SK-N-SH (cell line): ENCODE measurements at regions of chr6 and their contacts with region 1.

Region 1: GRCh38 chr6:37691904-37692806 is 5.5 kb downstream of the MDGA1 start:
- DNase-seq: peak; percentile 90
- H3K4me3 ChIP-seq: no peak overlapping the region; a peak in 1 of 4 replicates
- H3K27ac ChIP-seq: peak overlapping the region in 1 of 2 experiments; percentile 20; a peak in 1 of 4 replicates
- H3K4me1 ChIP-seq: peaks cover 4 to 25% of the 10 kb centered on the region in 2 experiments; a peak in 3 of 4 replicates
- H3K27me3 ChIP-seq: no peaks in the 10 kb centered on the region
- CTCF ChIP-seq: peak; percentile 96
- EP300 ChIP-seq: no peak
- RAD21 ChIP-seq: peak; percentile 99

Region 2: DNA sequence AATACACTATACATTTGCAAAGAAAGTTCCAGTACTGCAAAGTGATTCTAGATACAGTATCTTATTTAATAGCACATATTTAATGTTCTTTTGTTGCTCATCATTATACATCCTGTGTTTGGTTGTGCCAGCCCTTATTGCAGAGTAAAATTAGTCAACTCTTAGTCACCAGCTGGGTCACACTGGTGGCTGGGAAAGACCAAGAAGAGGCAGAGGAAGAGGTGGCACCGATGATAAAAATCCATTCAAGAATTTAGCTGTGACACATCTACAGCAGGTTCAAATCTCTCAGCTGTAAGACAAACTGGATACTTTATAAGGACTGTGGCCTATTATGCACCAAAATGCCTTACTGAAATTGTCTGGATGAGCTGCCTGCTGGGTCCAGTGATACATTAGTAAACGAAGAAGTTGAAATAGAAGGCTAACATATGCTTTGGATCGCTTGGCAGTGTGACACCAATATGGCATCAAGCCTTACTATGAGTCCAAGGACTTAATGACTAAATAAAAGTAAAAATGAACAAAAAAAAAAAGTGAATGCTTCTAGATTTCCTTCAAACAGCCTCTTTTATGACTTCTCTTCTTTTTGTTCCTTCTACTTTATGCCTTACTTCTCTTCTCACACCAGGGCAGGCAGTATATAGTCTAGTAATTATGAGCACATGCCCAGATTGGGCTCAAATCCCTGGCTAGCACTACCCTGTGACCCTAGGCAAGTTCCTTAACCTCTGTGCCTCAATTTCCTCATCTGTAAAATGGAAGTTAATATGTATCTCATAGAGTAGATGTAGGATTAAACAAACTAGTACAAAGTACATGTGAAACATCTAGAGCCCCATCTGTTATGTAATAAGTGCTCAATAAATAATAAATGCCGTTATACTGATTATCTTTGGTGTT is 367.8 kb before region 1 on chr6:
- CTCF ChIA-PET with region 1: interaction called, 15 read pairs
- POLR2A ChIA-PET with region 1: no interaction called
- DNase-seq: no peak
- H3K4me3 ChIP-seq: no peak overlapping the region
- H3K27ac ChIP-seq: peak overlapping the region in 1 of 2 experiments; percentile 65; a peak in 2 of 4 replicates
- H3K4me1 ChIP-seq: peaks cover 13 to 14% of the 10 kb centered on the region in 2 experiments; a peak in 3 of 4 replicates
- H3K27me3 ChIP-seq: no peaks in the 10 kb centered on the region
- CTCF ChIP-seq: no peak
- EP300 ChIP-seq: no peak
- RAD21 ChIP-seq: no peak

Region 3: GRCh38 chr6:37473397-37474095 is 218.6 kb before region 1 on chr6:
- CTCF ChIA-PET with region 1: interaction called, 21 read pairs
- POLR2A ChIA-PET with region 1: no interaction called
- DNase-seq: peak; percentile 84
- H3K4me3 ChIP-seq: no peak overlapping the region
- H3K27ac ChIP-seq: peak overlapping the region in 1 of 2 experiments; percentile 88; a peak in 3 of 4 replicates
- H3K4me1 ChIP-seq: peaks cover 7 to 32% of the 10 kb centered on the region in 2 experiments; a peak in 3 of 4 replicates
- H3K27me3 ChIP-seq: no peaks in the 10 kb centered on the region
- CTCF ChIP-seq: no peak
- EP300 ChIP-seq: peak; percentile 23 to 85; a peak in 3 of 4 replicates
- RAD21 ChIP-seq: peak; percentile 35

Region 4: GRCh38 chr6:37538107-37538506 is 154.0 kb before region 1 on chr6:
- CTCF ChIA-PET with region 1: interaction called, 20 read pairs
- POLR2A ChIA-PET with region 1: no interaction called
- DNase-seq: no peak
- H3K4me3 ChIP-seq: no peak overlapping the region
- H3K27ac ChIP-seq: no peak overlapping the region
- H3K4me1 ChIP-seq: peaks cover 0 to 24% of the 10 kb centered on the region in 2 experiments; a peak in 1 of 4 replicates
- H3K27me3 ChIP-seq: peaks cover 28% of the 10 kb centered on the region; the same call in 1 of the 2 replicates
- CTCF ChIP-seq: peak; percentile 34
- EP300 ChIP-seq: no peak
- RAD21 ChIP-seq: peak; percentile 52

Region 5: DNA sequence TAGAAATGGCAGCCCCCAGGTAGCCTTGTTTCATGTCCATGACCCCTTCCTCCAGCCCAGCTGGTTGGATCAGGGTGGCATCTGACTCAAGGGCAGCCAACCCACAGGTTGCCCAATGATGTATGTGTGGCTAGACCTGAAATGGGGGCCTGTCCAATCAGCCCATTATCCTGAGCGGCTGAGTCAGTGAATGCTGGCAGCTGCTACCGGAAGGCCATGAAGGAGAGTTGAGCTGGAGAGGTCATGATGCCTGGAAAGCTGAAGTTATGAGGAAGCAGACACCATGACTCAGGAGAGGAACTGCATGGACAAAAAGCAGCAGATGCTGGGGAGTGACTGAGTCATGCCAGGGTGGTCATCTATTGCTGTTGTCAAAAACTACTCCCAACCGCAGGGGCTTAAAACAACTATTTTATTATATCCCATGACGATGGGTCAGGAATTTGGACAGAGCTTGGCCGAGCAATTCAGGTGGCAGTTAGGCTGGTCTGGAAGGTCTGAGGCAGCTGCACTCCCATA is 61.8 kb before region 1 on chr6:
- CTCF ChIA-PET with region 1: interaction called, 10 read pairs
- POLR2A ChIA-PET with region 1: no interaction called
- DNase-seq: no peak
- H3K4me3 ChIP-seq: no peak overlapping the region
- H3K27ac ChIP-seq: peak overlapping the region in 1 of 2 experiments; percentile 88; a peak in 2 of 4 replicates
- H3K4me1 ChIP-seq: peaks cover 7 to 25% of the 10 kb centered on the region in 2 experiments; a peak in 3 of 4 replicates
- H3K27me3 ChIP-seq: no peaks in the 10 kb centered on the region
- CTCF ChIP-seq: no peak
- EP300 ChIP-seq: peak; percentile 35 to 96; a peak in 3 of 4 replicates
- RAD21 ChIP-seq: no peak

Region 6: DNA sequence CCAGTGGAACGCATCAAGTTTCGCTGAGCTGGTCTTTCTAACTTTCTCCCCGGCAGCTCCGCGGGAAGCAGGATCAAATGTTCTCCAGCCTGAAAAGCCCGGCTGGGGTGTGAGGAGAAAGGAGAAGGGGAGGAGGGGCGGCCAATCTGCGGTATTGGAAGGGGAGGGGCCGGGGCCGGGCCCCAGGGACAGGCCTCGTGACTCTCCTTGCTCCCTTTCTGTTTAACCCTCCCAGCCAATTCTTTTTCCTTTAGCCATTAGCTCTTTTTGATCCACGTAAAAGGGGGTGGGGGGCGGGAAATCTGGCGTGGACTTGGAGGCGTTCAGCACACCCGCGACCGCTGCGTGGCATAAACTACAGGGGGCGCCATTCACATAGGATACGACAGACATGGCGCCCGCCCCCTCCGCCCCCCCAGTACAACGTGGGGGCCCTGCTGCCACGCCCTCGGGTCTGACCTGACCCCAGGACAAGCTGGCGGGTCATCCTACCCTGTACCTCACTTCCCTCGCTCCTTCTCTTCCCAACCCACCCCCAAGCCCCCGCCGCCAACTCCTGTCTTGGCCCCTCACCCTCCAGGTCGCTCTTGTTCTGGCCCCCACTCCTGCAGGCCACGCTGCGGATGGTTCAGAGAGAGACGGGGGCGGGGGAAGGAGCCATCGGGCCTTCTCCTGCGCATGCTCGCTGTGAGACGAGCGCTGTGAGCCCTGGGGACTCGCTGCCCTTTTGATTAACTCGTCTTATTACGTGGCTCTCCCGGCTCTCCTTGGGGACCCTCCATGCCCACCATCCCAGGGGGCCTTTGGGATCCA is 13.3 kb after region 1 on chr6:
- CTCF ChIA-PET with region 1: interaction called, 15 read pairs
- POLR2A ChIA-PET with region 1: no interaction called
- DNase-seq: peak; percentile 86
- H3K4me3 ChIP-seq: peak overlapping the region in 1 of 2 experiments; percentile 26; a peak in 2 of 4 replicates
- H3K27ac ChIP-seq: peak overlapping the region in 1 of 2 experiments; percentile 74; a peak in 2 of 4 replicates
- H3K4me1 ChIP-seq: peaks cover 0 to 9% of the 10 kb centered on the region in 2 experiments; a peak in 1 of 4 replicates
- H3K27me3 ChIP-seq: no peaks in the 10 kb centered on the region
- CTCF ChIP-seq: peak; percentile 51
- EP300 ChIP-seq: no peak
- RAD21 ChIP-seq: peak; percentile 54

Region 7: DNA sequence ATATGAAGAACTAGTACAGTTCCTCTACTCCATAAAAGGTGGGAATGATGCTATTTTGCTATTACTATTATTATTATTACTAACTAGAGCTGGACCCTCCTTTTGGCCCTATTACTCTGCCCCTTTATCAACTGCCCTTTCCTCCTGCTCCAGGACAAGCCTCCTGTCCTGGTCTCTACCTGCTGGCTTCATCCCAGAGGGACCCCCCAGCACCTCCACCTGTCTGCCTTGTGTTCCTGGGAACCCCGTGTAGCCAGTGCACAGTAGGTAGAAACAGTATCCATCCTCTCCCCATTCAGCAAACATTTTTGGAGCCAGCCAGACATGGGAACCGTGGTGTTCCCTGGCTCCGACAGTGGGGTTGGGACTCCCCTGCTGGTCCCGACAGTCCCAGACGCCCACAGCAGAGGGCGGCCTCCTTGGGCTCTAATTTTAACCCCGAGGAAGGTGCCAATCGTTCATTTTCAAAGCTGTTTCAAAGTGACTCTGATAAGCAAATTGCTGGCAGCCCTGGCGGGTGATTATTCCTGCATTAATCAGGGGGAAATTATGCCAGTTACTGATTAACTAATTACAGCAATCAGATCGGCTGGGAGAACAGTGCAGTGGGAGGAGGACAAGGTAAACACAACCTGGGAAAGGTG is 49.7 kb after region 1 on chr6:
- CTCF ChIA-PET with region 1: no interaction called
- POLR2A ChIA-PET with region 1: no interaction called
- DNase-seq: peak; percentile 50
- H3K4me3 ChIP-seq: no peak overlapping the region
- H3K27ac ChIP-seq: no peak overlapping the region
- H3K4me1 ChIP-seq: peaks cover 0 to 23% of the 10 kb centered on the region in 2 experiments; a peak in 1 of 4 replicates
- H3K27me3 ChIP-seq: peaks cover 13% of the 10 kb centered on the region; the same call in 1 of the 2 replicates
- CTCF ChIP-seq: peak; percentile 37
- EP300 ChIP-seq: no peak
- RAD21 ChIP-seq: peak; percentile 24; the same call in 1 of the 2 replicates